ENCODE measurements at regions of chr11 and their contacts with region 1.

Region 1: GRCh38 chr11:72722050-72722748 is 30.0 kb downstream of the ARAP1 start:
- DNase-seq: peak; percentile 78 to 88 (median 80)
- ATAC-seq: peak; percentile 92
- H3K4me3 ChIP-seq: peak overlapping the region; percentile 33
- H3K27ac ChIP-seq: peak overlapping the region; percentile 79
- H3K4me1 ChIP-seq: peaks cover 11 to 29% of the 10 kb centered on the region in 2 experiments; a peak in 4 of 5 replicates
- H3K27me3 ChIP-seq: no peaks in the 10 kb centered on the region
- CTCF ChIP-seq: no peak
- EP300 ChIP-seq: no peak
- POLR2A ChIP-seq: peak; percentile 68
- RAD21 ChIP-seq: no peak

Region 2: GRCh38 chr11:72240461-72241290 is 481.5 kb before region 1 on chr11:
- CTCF ChIA-PET with region 1: no interaction called
- POLR2A ChIA-PET with region 1: no interaction called
- in situ Hi-C with region 1: no loop called
- intact Hi-C with region 1: no loop called
- DNase-seq: no peak
- ATAC-seq: no peak
- H3K4me3 ChIP-seq: no peak overlapping the region
- H3K27ac ChIP-seq: no peak overlapping the region
- H3K4me1 ChIP-seq: peaks cover 0 to 37% of the 10 kb centered on the region in 2 experiments; a peak in 2 of 5 replicates
- H3K27me3 ChIP-seq: peaks cover 15% of the 10 kb centered on the region in 2 experiments
- CTCF ChIP-seq: no peak
- EP300 ChIP-seq: no peak
- POLR2A ChIP-seq: no peak
- RAD21 ChIP-seq: no peak

Region 3: GRCh38 chr11:72497731-72498130 is 224.5 kb before region 1 on chr11:
- CTCF ChIA-PET with region 1: no interaction called
- POLR2A ChIA-PET with region 1: no interaction called
- in situ Hi-C with region 1: no loop called
- intact Hi-C with region 1: no loop called
- DNase-seq: no peak
- ATAC-seq: no peak
- H3K4me3 ChIP-seq: no peak overlapping the region
- H3K27ac ChIP-seq: no peak overlapping the region
- H3K4me1 ChIP-seq: peaks cover 17% of the 10 kb centered on the region in 2 experiments; a peak in 4 of 5 replicates
- H3K27me3 ChIP-seq: no peaks in the 10 kb centered on the region
- CTCF ChIP-seq: no peak
- EP300 ChIP-seq: no peak
- POLR2A ChIP-seq: no peak
- RAD21 ChIP-seq: no peak

Region 4: GRCh38 chr11:72793425-72794367 is 71.5 kb after region 1 on chr11 and contains the start of gene STARD10:
- CTCF ChIA-PET with region 1: interaction called, 24 read pairs
- POLR2A ChIA-PET with region 1: interaction called, 3 read pairs
- in situ Hi-C with region 1: no loop called
- intact Hi-C with region 1: loop called (anchors 1 kb)
- DNase-seq: peak; percentile 98 to 99 (median 99)
- ATAC-seq: peak; percentile 96
- H3K4me3 ChIP-seq: peak within 1 kb of the TSS; percentile 72
- H3K27ac ChIP-seq: peak within 1 kb of the TSS; percentile 86
- H3K4me1 ChIP-seq: peaks cover 23 to 40% of the 10 kb centered on the region in 2 experiments; a peak in 4 of 5 replicates
- H3K27me3 ChIP-seq: no peaks in the 10 kb centered on the region
- CTCF ChIP-seq: peak; percentile 91 to 99 (median 93)
- EP300 ChIP-seq: peak; percentile 38
- POLR2A ChIP-seq: peak; percentile 68
- RAD21 ChIP-seq: peak; percentile 80 to 85
- polyA plus RNA-seq, gene STARD10: 0.15 to 0.51 TPM

Region 5: DNA sequence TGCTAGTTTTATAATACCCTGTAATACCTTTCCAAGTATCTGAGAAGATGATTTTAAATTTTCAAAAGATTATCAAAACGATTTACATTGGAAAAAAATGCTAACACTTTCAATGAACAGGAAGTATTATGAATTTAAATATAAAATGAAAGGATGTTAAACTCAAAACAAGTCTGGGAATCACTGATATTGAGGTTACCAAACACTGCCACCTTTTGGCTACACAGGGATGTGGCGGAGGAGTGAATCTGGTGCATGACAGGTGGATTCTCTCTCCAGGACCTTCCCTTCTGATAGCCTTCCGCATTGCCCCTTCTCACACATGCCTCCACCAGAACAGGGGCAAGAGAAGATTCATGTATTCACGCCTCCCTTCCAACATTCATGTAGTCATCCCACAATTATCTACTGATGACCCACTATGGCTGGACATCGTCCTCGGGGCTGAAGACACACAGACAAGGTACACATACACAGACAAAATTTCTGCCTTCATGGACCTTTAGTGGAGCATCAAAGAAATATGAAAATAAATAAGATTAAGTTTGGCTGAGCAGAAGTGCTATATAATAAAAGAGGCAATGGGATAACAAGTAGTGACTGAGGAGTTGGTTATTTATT is 126.8 kb after region 1 on chr11:
- CTCF ChIA-PET with region 1: no interaction called
- POLR2A ChIA-PET with region 1: no interaction called
- in situ Hi-C with region 1: no loop called
- intact Hi-C with region 1: loop called (anchors 1 kb)
- DNase-seq: peak in 2 of 4 experiments; percentile 58 to 60
- ATAC-seq: peak; percentile 86
- H3K4me3 ChIP-seq: no peak overlapping the region
- H3K27ac ChIP-seq: no peak overlapping the region
- H3K4me1 ChIP-seq: no peaks in the 10 kb centered on the region
- H3K27me3 ChIP-seq: no peaks in the 10 kb centered on the region
- CTCF ChIP-seq: peak; percentile 73 to 81 (median 80)
- EP300 ChIP-seq: no peak
- POLR2A ChIP-seq: no peak
- RAD21 ChIP-seq: peak; percentile 41 to 77

Region 6: DNA sequence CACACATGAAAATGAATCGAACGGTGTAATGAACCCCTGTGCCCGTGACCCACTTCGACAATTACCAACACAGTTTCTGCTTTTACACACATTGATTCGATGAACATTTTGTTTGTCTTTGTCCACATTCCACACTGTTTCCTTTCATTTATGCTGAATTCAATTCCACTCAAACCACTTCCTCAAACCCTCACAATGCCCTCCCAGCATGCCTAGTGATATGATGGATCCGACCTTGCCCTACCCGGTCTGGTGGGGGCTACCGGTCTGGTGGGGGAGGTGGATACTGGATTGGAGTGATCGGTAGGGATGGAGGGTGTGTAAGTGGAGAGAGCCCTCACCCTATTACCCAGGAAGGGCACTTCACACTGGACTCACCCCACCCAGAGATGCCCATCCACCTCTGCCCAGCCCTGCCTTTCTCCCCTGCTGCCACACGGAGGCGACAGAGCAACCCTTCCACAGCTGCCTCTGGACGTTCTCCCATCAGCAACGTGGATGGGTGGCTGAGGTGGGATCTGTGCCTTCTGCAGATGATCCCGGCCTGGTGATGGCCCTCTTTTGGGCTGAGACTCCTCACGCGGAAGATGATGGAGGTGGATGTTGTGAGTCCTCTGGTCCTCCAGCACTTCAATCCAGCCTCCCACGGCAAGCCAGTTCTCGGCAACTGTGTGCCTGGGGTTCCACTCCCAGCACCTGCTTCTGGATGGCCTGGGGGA is 462.9 kb after region 1 on chr11:
- CTCF ChIA-PET with region 1: no interaction called
- POLR2A ChIA-PET with region 1: interaction called, 3 read pairs
- in situ Hi-C with region 1: loop called (anchors 10 kb)
- intact Hi-C with region 1: no loop called
- DNase-seq: peak; percentile 53 to 63 (median 58)
- ATAC-seq: peak; percentile 79
- H3K4me3 ChIP-seq: no peak overlapping the region
- H3K27ac ChIP-seq: no peak overlapping the region
- H3K4me1 ChIP-seq: peaks cover 16 to 25% of the 10 kb centered on the region in 2 experiments; a peak in 4 of 5 replicates
- H3K27me3 ChIP-seq: peaks cover 7 to 8% of the 10 kb centered on the region in 2 experiments; a peak in 4 of 5 replicates
- CTCF ChIP-seq: peak; percentile 77 to 92 (median 87)
- EP300 ChIP-seq: no peak
- POLR2A ChIP-seq: no peak
- RAD21 ChIP-seq: peak; percentile 51 to 79

Measured in K562 (cell line).